Ovary (tissue), 10 donors: ENCODE measurements at regions of chr7 and their contacts with region 1.

Region 1: DNA sequence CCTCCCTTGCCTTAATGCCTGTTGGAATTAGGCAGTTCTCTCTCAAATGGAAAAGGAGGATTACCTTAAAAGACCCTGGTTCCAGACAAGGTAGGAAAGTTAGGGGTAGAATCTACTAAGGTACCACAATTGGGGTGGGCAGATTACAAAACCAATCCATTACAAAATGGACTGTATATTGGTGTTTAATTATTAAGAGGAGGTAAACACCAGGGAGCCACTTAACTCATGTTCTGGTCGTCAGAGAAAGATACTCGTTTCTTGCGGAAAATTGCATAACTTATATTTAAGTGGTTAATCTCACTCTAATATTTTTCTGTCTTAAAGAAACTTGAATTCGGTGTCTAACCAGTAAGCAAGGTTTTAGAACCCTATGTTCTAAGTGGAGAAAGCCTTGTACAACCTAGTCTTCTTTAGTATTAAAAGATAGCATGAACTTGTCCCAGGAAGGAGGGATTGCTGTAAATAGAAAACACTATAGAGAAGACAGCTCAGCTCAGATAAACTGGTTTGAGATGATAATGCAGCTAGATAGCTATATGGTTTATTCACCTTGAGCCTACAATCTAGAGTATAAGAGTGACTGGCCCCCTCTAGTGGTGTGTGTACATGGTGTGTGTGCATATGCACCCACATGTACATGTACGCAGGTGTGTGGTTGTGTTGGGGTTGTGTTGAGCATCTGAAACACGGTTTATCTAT is 58.0 kb upstream of the STRIP2 start:
- DNase-seq: no peak
- H3K4me3 ChIP-seq: no peak overlapping the region
- H3K27ac ChIP-seq: no peak overlapping the region
- H3K4me1 ChIP-seq: no peaks in the 10 kb centered on the region
- H3K27me3 ChIP-seq: no peaks in the 10 kb centered on the region
- CTCF ChIP-seq: no peak
- EP300 ChIP-seq: no peak
- POLR2A ChIP-seq: no peak

Region 2: GRCh38 chr7:129351320-129351719 is 24.9 kb before region 1 on chr7:
- intact Hi-C with region 1: no loop called
- DNase-seq: no peak
- H3K4me3 ChIP-seq: no peak overlapping the region
- H3K27ac ChIP-seq: no peak overlapping the region
- H3K4me1 ChIP-seq: no peaks in the 10 kb centered on the region
- H3K27me3 ChIP-seq: no peaks in the 10 kb centered on the region
- CTCF ChIP-seq: no peak
- EP300 ChIP-seq: no peak
- POLR2A ChIP-seq: no peak

Region 3: DNA sequence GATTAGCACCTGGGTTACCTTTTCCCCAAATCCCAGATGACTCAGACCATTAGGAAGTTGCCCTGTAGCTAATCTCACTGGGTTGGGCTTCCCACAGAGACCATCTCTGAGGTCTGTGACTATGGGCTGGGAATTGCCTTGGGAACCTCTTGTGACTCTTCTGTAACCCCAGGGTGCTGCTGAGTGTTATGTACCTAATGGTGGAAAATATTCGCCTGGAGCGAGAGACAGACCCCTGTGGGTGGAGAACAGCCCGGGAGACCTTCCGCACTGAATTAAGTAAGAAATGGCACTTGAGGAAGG is 78.0 kb after region 1 on chr7:
- intact Hi-C with region 1: loop called in 1 of 4 experiments (anchors 10 kb)
- DNase-seq: no peak
- H3K4me3 ChIP-seq: no peak overlapping the region
- H3K27ac ChIP-seq: no peak overlapping the region
- H3K4me1 ChIP-seq: no peaks in the 10 kb centered on the region
- H3K27me3 ChIP-seq: no peaks in the 10 kb centered on the region
- CTCF ChIP-seq: no peak
- EP300 ChIP-seq: no peak
- POLR2A ChIP-seq: no peak